ENCODE measurements at regions of chr10 and their contacts with region 1.

Region 1: DNA sequence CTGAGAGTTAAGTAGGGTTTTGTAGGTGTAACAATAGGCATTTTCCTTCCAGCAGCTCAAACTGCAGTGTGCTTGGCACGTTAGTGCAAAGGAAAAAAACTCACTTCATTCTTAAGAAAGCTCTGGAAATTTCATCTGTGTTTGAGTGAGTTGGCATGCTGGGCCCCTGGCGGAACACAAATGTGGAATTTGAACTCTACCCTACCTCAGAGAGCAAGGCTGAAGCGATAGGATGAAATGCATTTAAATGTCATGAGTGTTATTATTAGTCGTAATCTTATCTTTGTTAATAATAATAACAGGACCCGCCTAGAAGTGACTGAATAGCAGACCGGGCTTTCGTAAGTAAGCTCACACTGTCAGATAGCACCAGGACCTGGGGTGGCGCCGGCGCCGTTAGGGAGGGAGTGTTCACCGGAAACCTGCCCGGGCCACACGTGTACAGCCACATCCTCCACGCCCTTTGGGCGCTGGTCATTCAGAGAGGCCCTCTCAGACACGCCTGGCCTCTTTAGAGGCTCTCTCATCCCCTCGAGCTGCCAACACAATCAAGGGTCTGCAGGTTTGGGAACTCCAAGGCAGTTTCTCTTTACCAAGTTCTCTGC is 63.5 kb downstream of the GRK5 start:
- DNase-seq: peak; percentile 75
- ATAC-seq: peak; percentile 89
- H3K4me3 ChIP-seq: peak overlapping the region; percentile 12 to 52 (median 34); a peak in 5 of 6 replicates
- H3K27ac ChIP-seq: peak overlapping the region; percentile 83
- H3K4me1 ChIP-seq: peaks cover 63% of the 10 kb centered on the region
- H3K27me3 ChIP-seq: no peaks in the 10 kb centered on the region
- CTCF ChIP-seq: no peak; the same call in 1 of the 2 replicates
- EP300 ChIP-seq: no peak; a peak in 1 of 4 replicates
- POLR2A ChIP-seq: peak; percentile 51 to 54; a peak in 3 of 4 replicates
- RAD21 ChIP-seq: no peak; the same call in 1 of the 2 replicates

Region 2: GRCh38 chr10:119222537-119222936 is 48.3 kb before region 1 on chr10:
- CTCF ChIA-PET with region 1: no interaction called
- POLR2A ChIA-PET with region 1: interaction called, 22 read pairs
- in situ Hi-C with region 1: no loop called
- intact Hi-C with region 1: loop called (anchors 1 kb)
- DNase-seq: peak; percentile 77
- ATAC-seq: peak; percentile 87
- H3K4me3 ChIP-seq: peak overlapping the region; percentile 40 to 69 (median 42); a peak in 5 of 6 replicates
- H3K27ac ChIP-seq: peak overlapping the region; percentile 60
- H3K4me1 ChIP-seq: peaks cover 50% of the 10 kb centered on the region
- H3K27me3 ChIP-seq: no peaks in the 10 kb centered on the region
- CTCF ChIP-seq: no peak
- EP300 ChIP-seq: no peak
- POLR2A ChIP-seq: no peak
- RAD21 ChIP-seq: no peak

Region 3: GRCh38 chr10:119253433-119254174 is 17.3 kb before region 1 on chr10:
- CTCF ChIA-PET with region 1: no interaction called
- POLR2A ChIA-PET with region 1: interaction called, 168 read pairs
- in situ Hi-C with region 1: no loop called
- intact Hi-C with region 1: loop called (anchors 1 kb)
- DNase-seq: peak; percentile 92
- ATAC-seq: peak; percentile 86
- H3K4me3 ChIP-seq: peak overlapping the region; percentile 39 to 70 (median 51); a peak in 5 of 6 replicates
- H3K27ac ChIP-seq: peak overlapping the region; percentile 90
- H3K4me1 ChIP-seq: peaks cover 74% of the 10 kb centered on the region
- H3K27me3 ChIP-seq: no peaks in the 10 kb centered on the region
- CTCF ChIP-seq: peak; percentile 33
- EP300 ChIP-seq: no peak; a peak in 1 of 4 replicates
- POLR2A ChIP-seq: no peak; a peak in 1 of 4 replicates
- RAD21 ChIP-seq: peak; percentile 41; the same call in 1 of the 2 replicates

Region 4: GRCh38 chr10:119315128-119316001 is 44.5 kb after region 1 on chr10:
- CTCF ChIA-PET with region 1: no interaction called
- POLR2A ChIA-PET with region 1: interaction called, 37 read pairs
- in situ Hi-C with region 1: no loop called
- intact Hi-C with region 1: loop called (anchors 2 kb)
- DNase-seq: peak; percentile 83
- ATAC-seq: peak; percentile 21; the same call in 1 of the 3 replicates
- H3K4me3 ChIP-seq: no peak overlapping the region
- H3K27ac ChIP-seq: peak overlapping the region; percentile 95
- H3K4me1 ChIP-seq: peaks cover 82% of the 10 kb centered on the region
- H3K27me3 ChIP-seq: no peaks in the 10 kb centered on the region
- CTCF ChIP-seq: no peak
- EP300 ChIP-seq: peak in 1 of 2 experiments; percentile 10; a peak in 1 of 4 replicates
- POLR2A ChIP-seq: 0 out of 4 replicates have a peak, but pooled peaks of 1 of the 2 experiments have one; percentile 27
- RAD21 ChIP-seq: no peak

Region 5: DNA sequence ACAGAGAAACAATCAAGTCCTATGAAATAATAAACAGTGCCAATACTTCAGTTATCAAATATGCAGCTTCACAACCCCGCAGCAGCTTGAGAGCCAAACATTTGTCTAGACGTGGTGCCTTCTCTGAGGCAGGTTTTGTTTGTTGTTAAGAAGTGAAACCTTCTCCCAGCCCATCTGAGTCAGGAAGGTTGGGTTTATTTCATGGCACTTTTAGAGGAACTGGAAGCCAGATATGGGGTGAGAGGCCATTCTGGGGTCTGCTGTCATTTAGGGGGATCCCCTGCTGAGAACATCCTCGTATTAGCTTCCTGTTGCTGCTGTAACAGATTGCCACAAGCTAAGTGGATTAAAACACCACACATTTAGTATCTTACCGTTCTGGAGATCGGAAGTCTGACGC is 50.1 kb after region 1 on chr10:
- CTCF ChIA-PET with region 1: interaction called, 3 read pairs
- POLR2A ChIA-PET with region 1: interaction called, 60 read pairs
- in situ Hi-C with region 1: no loop called
- intact Hi-C with region 1: loop called (anchors 2 kb)
- DNase-seq: no peak
- ATAC-seq: no peak
- H3K4me3 ChIP-seq: no peak overlapping the region
- H3K27ac ChIP-seq: no peak overlapping the region
- H3K4me1 ChIP-seq: peaks cover 87% of the 10 kb centered on the region
- H3K27me3 ChIP-seq: no peaks in the 10 kb centered on the region
- CTCF ChIP-seq: no peak
- EP300 ChIP-seq: no peak
- POLR2A ChIP-seq: no peak
- RAD21 ChIP-seq: no peak

Region 6: GRCh38 chr10:119409866-119410299 is 139.0 kb after region 1 on chr10:
- CTCF ChIA-PET with region 1: no interaction called
- POLR2A ChIA-PET with region 1: interaction called, 13 read pairs
- in situ Hi-C with region 1: no loop called
- intact Hi-C with region 1: no loop called
- DNase-seq: peak; percentile 75
- ATAC-seq: peak; percentile 80
- H3K4me3 ChIP-seq: peak overlapping the region in 2 of 3 experiments; percentile 28 to 51; a peak in 3 of 6 replicates
- H3K27ac ChIP-seq: peak overlapping the region; percentile 85
- H3K4me1 ChIP-seq: peaks cover 61% of the 10 kb centered on the region
- H3K27me3 ChIP-seq: no peaks in the 10 kb centered on the region; a peak in 1 of 5 replicates
- CTCF ChIP-seq: no peak
- EP300 ChIP-seq: peak; percentile 39 to 73; a peak in 3 of 4 replicates
- POLR2A ChIP-seq: peak in 1 of 2 experiments; percentile 55; a peak in 2 of 4 replicates
- RAD21 ChIP-seq: no peak

Measured in HepG2 (cell line).